ENCODE measurements at regions of chr11 and their contacts with region 1.

Region 1: GRCh38 chr11:18775492-18776292 is 15.9 kb downstream of the PTPN5 start:
- DNase-seq: peak; percentile 46 to 92
- H3K4me3 ChIP-seq: no peak overlapping the region
- H3K27ac ChIP-seq: no peak overlapping the region
- H3K4me1 ChIP-seq: peaks cover 0 to 35% (median 8%) of the 10 kb centered on the region in 4 experiments; a peak in 6 of 7 replicates
- H3K27me3 ChIP-seq: 0 out of 7 replicates have a peak, but pooled peaks cover 0 to 3% (median 0%) of the 10 kb centered on the region in 4 experiments
- CTCF ChIP-seq: peak; percentile 90 to 97 (median 94)
- EP300 ChIP-seq: no peak
- POLR2A ChIP-seq: no peak
- RAD21 ChIP-seq: peak; percentile 90

Region 2: DNA sequence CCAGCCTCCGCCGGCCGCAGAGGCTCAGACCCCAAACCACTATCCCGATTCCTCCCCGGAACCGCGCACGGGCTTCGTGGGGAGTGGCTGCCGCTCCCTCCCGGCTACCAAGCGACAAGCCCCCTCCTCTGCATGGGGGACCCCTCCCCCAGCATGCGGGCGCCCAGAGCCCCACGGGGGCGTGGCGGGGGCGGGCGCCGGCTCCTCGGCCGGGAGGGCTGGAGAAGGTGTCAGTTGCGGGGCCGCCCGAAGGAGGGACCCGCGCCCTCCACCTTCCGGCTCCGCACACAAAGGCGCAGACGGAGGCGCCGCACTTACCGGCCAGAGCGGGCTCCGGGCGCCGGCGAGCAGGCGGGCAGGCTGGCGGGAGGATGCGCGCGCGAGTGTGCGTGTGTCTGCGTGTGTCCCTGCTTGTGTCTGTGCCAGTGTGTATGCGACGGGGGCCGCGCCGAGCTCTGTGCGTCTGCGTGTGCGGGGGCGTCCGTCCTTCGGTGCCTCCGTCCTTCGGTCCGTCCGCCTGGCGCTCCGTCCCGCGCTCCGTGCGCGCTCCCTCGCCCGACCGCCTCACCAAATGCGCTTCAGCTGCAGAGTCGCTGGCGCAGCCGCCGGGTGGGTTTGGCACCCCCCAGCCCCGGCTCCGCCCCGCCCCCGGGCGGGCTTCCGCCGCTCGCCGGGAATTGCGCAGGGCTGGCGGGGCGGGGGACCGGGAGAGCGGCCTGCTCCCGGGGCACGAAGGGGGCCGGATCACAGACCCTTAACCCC is 15.7 kb after region 1 on chr11 and contains the start of gene PTPN5:
- CTCF ChIA-PET with region 1: interaction called, 363 read pairs
- POLR2A ChIA-PET with region 1: interaction called, 6 read pairs
- DNase-seq: peak in 1 of 2 experiments; percentile 77
- H3K4me3 ChIP-seq: peak within 1 kb of the TSS; percentile 73 to 97 (median 78)
- H3K27ac ChIP-seq: no peak within 1 kb of the TSS
- H3K4me1 ChIP-seq: peaks cover 2 to 8% (median 3%) of the 10 kb centered on the region in 4 experiments; a peak in 6 of 7 replicates
- H3K27me3 ChIP-seq: peaks cover 0 to 33% (median 22%) of the 10 kb centered on the region in 4 experiments; a peak in 6 of 7 replicates
- CTCF ChIP-seq: no peak
- EP300 ChIP-seq: no peak
- POLR2A ChIP-seq: peak; percentile 23 to 65
- RAD21 ChIP-seq: no peak
- total RNA-seq, gene PTPN5: 6.8 and 8.4 TPM in 2 replicates

Region 3: DNA sequence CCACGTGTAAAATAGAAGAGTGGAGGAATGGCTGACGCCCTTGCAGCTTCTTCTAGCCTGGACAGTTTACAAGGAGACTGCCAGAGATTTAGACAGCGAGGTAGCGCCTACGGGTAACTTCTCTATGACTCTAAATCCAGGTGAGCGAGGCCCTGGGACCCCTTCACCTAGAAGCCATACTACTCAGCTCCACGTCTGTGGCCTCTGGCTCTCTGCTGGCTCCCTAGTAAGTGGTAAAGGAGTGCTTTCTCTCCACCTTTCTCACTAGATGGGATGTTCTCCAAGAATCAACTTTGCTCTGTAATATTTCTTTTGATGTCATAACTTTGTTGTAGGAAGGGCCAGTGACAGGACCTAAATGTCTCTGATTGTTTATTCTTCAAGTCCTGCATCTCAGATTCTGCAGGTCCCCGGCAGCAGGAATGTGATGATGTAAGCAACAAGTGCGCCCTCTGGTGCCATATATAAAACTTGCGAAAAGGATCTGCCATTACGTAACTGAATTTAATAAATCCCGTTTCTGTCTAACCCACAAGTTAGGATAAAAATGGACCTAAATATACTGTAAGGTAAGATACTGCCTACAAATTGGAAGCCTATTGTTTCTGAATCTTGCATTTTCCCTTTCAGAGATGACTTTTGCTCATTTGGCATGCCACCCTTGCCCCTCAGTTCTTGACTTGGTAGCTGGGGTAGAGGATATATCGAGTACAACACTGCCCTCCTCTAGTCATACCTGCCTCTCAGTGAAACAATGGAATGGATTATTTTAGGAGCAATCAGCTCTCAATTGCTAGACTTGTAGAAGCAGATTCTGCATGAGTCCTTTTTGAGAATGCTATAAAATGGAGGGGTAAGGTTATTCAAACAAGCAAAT is 26.9 kb after region 1 on chr11:
- CTCF ChIA-PET with region 1: interaction called, 363 read pairs
- POLR2A ChIA-PET with region 1: interaction called, 3 read pairs
- DNase-seq: peak in 1 of 2 experiments; percentile 54
- H3K4me3 ChIP-seq: no peak overlapping the region
- H3K27ac ChIP-seq: no peak overlapping the region
- H3K4me1 ChIP-seq: no peaks in the 10 kb centered on the region
- H3K27me3 ChIP-seq: no peaks in the 10 kb centered on the region
- CTCF ChIP-seq: peak; percentile 23 to 69 (median 61)
- EP300 ChIP-seq: no peak
- POLR2A ChIP-seq: no peak
- RAD21 ChIP-seq: peak; percentile 72 to 80

Region 4: DNA sequence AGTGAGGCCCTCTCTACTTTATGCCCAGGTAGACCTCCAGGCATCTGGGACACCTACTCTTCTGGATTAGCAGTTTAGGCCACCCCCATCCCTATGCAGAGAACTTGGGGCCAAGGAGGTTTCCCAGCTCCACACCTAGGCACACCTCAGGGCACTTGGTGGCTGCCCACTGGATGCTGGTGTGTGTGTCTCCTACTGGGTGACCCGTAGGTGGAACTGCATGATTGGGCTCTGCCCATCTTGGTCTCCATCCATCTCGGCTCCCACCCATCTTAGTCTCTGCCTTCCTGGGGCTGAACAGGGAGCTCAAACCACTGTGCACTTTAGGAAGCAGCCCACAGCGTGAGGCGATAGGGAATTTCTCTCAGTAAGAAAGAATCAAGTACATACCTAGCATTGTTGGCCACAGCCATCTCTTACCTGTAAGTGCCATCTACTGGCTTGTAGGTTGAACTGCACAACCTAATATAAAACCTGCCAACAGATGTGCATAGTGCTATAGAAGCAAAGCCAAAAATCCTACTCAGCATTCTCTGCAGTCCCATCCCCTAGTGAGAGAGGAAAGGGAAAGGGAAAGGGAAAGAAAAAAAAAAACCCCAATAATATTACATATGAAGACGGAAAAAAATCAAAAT is 77.5 kb after region 1 on chr11:
- CTCF ChIA-PET with region 1: interaction called, 26 read pairs
- POLR2A ChIA-PET with region 1: no interaction called
- DNase-seq: peak in 1 of 2 experiments; percentile 56
- H3K4me3 ChIP-seq: no peak overlapping the region
- H3K27ac ChIP-seq: no peak overlapping the region
- H3K4me1 ChIP-seq: peaks cover 0 to 3% (median 0%) of the 10 kb centered on the region in 4 experiments; a peak in 2 of 7 replicates
- H3K27me3 ChIP-seq: no peaks in the 10 kb centered on the region
- CTCF ChIP-seq: peak in 2 of 3 experiments; percentile 69 to 76; a peak in 3 of 4 replicates
- EP300 ChIP-seq: no peak
- POLR2A ChIP-seq: no peak
- RAD21 ChIP-seq: peak; percentile 87 to 90